Activated CD4-positive, alpha-beta T cell treated with anti-CD3 and anti-CD28 coated beads, Interleukin-2, amount 10 ng/mL, durations not matched to agents 24 days and 14 days (primary cell): ENCODE measurements at regions of chr3 and their contacts with region 1.

Region 1: GRCh38 chr3:72629191-72629631 is 219.0 kb downstream of the SHQ1 start:
- DNase-seq: peak; percentile 60
- H3K4me3 Mint-ChIP-seq: peak overlapping the region; percentile 37
- H3K27ac Mint-ChIP-seq: peak overlapping the region; percentile 78
- H3K4me1 Mint-ChIP-seq: peaks cover 48% of the 10 kb centered on the region
- H3K27me3 Mint-ChIP-seq: no peaks in the 10 kb centered on the region

Region 2: DNA sequence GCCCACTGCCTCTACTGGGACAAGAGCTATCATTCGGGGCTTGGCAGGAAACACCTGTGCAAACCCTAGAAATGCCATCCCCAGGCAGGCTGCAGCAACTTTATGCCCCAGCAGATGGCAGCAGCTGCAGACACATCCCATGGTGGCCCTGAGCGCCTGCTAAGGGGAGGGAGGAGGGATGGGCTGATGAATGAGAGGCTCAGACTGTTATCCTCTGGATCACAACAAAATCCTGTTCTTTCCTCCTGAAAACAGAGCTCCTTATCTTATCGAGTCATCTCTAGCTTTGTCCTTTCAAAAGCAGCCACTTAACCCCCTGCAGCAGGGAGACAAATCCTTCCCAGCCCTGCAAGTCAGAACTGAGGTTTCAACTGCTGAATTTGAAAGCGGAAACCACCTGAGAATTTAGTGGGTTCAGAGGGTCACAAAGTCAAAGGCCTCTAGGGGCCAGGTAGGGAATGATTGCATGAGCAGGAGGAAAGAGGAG is 753.7 kb before region 1 on chr3:
- intact Hi-C with region 1: loop called (anchors 10 kb)
- DNase-seq: peak; percentile 93
- H3K4me3 Mint-ChIP-seq: peak overlapping the region; percentile 14
- H3K27ac Mint-ChIP-seq: peak overlapping the region; percentile 74
- H3K4me1 Mint-ChIP-seq: peaks cover 28% of the 10 kb centered on the region
- H3K27me3 Mint-ChIP-seq: peaks cover 12% of the 10 kb centered on the region

Region 3: DNA sequence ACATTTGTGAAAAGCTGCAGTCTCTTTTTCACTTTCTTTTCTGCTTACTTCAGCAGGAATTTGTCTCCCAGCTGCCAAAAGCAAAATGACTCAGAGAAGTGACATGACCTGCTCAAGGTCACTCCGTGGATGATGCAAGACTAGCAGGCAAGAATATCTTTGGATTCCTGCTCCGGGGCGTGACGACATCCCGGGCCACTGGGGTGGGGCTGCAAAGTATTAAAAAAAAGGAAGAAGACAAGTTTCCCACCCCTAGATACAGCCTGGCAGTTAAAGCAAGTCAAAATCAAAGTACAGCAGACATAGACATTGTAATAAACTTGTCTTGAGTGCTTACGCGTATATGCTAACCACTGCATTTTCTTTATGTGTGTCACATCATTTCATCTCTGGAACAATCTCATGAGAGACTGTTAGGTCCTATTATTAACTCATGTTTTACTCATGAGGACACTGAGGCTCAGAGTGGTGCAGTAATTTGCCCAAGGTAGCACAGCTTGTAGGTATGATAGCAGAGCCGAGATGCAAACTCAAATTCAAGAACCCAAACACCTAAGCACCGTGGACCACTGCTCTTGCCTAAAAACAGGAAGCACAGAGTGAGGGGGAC is 359.0 kb before region 1 on chr3:
- intact Hi-C with region 1: loop called (anchors 10 kb)
- DNase-seq: peak; percentile 65
- H3K4me3 Mint-ChIP-seq: peak overlapping the region; percentile 12
- H3K27ac Mint-ChIP-seq: peak overlapping the region; percentile 67
- H3K4me1 Mint-ChIP-seq: peaks cover 57% of the 10 kb centered on the region
- H3K27me3 Mint-ChIP-seq: no peaks in the 10 kb centered on the region

Region 4: GRCh38 chr3:72447059-72447946 is 181.9 kb before region 1 on chr3:
- intact Hi-C with region 1: loop called (anchors 1 kb)
- DNase-seq: peak; percentile 99
- H3K4me3 Mint-ChIP-seq: peak overlapping the region; percentile 92
- H3K27ac Mint-ChIP-seq: peak overlapping the region; percentile 86
- H3K4me1 Mint-ChIP-seq: peaks cover 46% of the 10 kb centered on the region
- H3K27me3 Mint-ChIP-seq: peaks cover 4% of the 10 kb centered on the region

Region 5: GRCh38 chr3:72523429-72524151 is 105.6 kb before region 1 on chr3:
- intact Hi-C with region 1: loop called (anchors 1 kb)
- DNase-seq: no peak
- H3K4me3 Mint-ChIP-seq: no peak overlapping the region
- H3K27ac Mint-ChIP-seq: peak overlapping the region; percentile 91
- H3K4me1 Mint-ChIP-seq: peaks cover 36% of the 10 kb centered on the region
- H3K27me3 Mint-ChIP-seq: no peaks in the 10 kb centered on the region

Region 6: DNA sequence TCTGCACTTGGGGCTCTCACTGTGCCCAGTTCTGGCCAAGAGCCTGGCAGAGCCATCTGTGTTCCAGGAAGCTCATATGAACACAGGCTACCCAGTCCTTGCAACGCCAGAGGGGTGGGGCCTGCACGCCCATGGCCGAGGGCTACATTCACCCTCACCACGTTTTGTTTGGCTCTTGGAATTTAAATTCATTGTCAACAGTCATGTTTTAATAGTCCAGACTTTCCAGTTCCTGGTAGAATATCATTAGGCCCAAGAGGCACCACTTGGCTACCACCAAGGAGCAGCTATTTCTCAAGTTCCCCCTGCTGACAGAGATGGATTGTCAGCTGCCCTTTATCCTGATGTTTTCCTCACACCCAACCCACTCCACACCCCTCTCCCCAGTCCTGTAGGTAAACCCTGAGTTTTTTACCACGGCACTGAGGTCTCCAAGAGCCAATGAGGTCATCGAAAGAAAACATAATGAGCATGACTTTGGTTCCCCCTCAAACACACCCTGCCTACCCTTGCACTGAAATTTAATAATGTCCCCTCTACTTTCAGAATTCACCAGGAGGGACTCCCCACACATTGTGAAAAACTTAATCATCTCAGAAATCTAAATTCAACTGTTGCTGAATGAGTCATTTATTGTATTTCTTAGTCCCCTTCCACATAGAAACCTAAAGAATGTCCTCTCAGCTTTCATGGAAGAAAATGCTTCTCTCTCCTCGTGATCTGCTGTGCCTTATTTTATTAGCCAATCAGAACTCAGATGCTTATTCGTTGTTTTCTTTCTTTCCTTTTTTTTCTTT is 93.9 kb after region 1 on chr3:
- intact Hi-C with region 1: loop called (anchors 2 kb)
- DNase-seq: no peak
- H3K4me3 Mint-ChIP-seq: no peak overlapping the region
- H3K27ac Mint-ChIP-seq: peak overlapping the region; percentile 70
- H3K4me1 Mint-ChIP-seq: peaks cover 9% of the 10 kb centered on the region
- H3K27me3 Mint-ChIP-seq: no peaks in the 10 kb centered on the region